ENCODE measurements at regions of chr2 and their contacts with region 1.

Region 1: DNA sequence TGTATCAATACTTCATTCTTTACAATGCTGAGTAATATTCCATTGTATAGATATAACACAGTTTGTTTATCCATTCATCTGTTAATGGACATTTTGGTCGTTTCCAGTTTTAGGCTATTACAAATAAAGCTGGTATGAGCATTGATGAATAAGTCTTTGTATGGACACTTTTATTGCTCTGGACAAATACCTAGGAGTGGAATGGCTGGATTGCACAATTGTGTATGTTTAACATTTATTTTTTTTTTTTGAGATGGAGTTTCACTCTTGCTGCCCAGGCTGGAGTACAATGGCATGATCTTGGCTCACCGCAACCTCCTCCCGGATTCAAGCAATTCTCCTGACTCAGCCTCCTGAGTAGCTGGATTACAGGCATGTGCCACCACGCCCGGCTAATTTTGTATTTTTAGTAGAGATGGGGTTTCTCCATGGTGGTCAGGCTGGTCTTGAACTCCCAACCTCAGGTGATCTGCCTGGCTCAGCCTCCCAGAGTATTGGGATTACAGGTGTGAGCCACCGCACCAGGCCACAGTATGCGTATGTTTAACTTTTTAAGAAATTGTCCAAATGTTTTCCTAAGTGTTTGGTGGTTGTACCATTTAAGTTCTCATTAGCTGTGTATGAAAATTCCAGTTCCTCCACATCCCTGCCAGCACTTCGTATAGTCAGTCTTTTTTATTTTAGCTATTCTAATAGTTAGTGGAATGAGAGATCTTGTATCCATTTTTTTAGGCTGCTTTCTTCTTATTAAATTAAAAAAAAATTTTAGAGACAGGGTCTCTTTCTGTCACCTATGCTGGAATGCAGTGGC is 194.9 kb upstream of the HAAO start:
- DNase-seq: peak; percentile 95
- ATAC-seq: peak; percentile 91
- H3K4me3 ChIP-seq: no peak overlapping the region
- H3K27ac ChIP-seq: peak overlapping the region; percentile 90
- H3K4me1 ChIP-seq: peaks cover 23% of the 10 kb centered on the region
- H3K27me3 ChIP-seq: no peaks in the 10 kb centered on the region
- CTCF ChIP-seq: no peak

Region 2: GRCh38 chr2:43010438-43011157 is 23.3 kb after region 1 on chr2:
- CTCF ChIA-PET with region 1: no interaction called
- POLR2A ChIA-PET with region 1: no interaction called
- intact Hi-C with region 1: loop called (anchors 1 kb)
- DNase-seq: peak; percentile 90
- ATAC-seq: peak; percentile 91
- H3K4me3 ChIP-seq: no peak overlapping the region
- H3K27ac ChIP-seq: peak overlapping the region; percentile 69
- H3K4me1 ChIP-seq: peaks cover 16% of the 10 kb centered on the region
- H3K27me3 ChIP-seq: no peaks in the 10 kb centered on the region
- CTCF ChIP-seq: no peak

Region 3: DNA sequence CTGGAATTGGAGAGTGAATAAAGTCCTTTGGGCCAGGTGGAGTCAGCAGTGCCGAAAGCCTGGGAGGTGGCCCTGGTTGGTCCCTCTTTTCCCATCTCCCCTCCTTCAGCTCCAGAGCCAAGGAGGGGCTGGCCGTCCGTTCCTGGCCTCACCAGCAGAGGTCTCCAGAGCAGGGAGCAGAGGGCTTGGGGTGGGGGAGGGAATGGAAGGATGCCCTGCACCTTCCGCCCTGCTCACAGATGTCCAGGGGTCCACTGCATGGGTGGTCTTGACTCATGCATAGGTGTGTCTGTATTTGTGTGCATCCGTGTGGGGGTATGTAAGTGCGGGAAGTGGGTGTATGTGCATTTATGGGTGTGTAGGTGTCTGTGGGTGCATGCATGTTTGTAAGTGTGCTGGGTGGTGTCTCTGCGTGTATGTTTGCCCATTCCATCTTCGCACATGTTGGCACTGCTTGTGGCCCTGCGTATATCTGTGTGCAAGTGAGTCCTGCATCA is 37.2 kb after region 1 on chr2:
- CTCF ChIA-PET with region 1: interaction called, 14 read pairs
- POLR2A ChIA-PET with region 1: no interaction called
- intact Hi-C with region 1: no loop called
- DNase-seq: peak; percentile 69
- ATAC-seq: peak; percentile 85
- H3K4me3 ChIP-seq: no peak overlapping the region
- H3K27ac ChIP-seq: no peak overlapping the region
- H3K4me1 ChIP-seq: 0 out of 2 replicates have a peak, but pooled peaks cover 3% of the 10 kb centered on the region
- H3K27me3 ChIP-seq: no peaks in the 10 kb centered on the region
- CTCF ChIP-seq: peak; percentile 77

Region 4: GRCh38 chr2:43075054-43075593 is 87.8 kb after region 1 on chr2:
- CTCF ChIA-PET with region 1: no interaction called
- POLR2A ChIA-PET with region 1: no interaction called
- intact Hi-C with region 1: loop called (anchors 1 kb)
- DNase-seq: peak; percentile 97
- ATAC-seq: peak; percentile 88
- H3K4me3 ChIP-seq: no peak overlapping the region
- H3K27ac ChIP-seq: peak overlapping the region; percentile 98
- H3K4me1 ChIP-seq: peaks cover 64% of the 10 kb centered on the region
- H3K27me3 ChIP-seq: no peaks in the 10 kb centered on the region
- CTCF ChIP-seq: no peak

Region 5: GRCh38 chr2:43877782-43878464 is 890.6 kb after region 1 on chr2:
- CTCF ChIA-PET with region 1: no interaction called
- POLR2A ChIA-PET with region 1: interaction called, 10 read pairs
- intact Hi-C with region 1: no loop called
- DNase-seq: peak; percentile 81
- ATAC-seq: peak; percentile 87
- H3K4me3 ChIP-seq: no peak overlapping the region
- H3K27ac ChIP-seq: no peak overlapping the region
- H3K4me1 ChIP-seq: no peaks in the 10 kb centered on the region
- H3K27me3 ChIP-seq: no peaks in the 10 kb centered on the region
- CTCF ChIP-seq: peak; percentile 94